CD8-positive, alpha-beta T cell (primary cell): ENCODE measurements at regions of chr12 and their contacts with region 1.

Region 1: GRCh38 chr12:104456417-104456949 is at the start of gene CHST11:
- DNase-seq: peak; percentile 40 to 88 (median 72)
- ATAC-seq: peak; percentile 64
- H3K4me3 ChIP-seq: peak within 1 kb of the TSS; percentile 88 to 97
- H3K4me3 Mint-ChIP-seq: peak within 1 kb of the TSS; percentile 99
- H3K27ac ChIP-seq: peak within 1 kb of the TSS; percentile 70 to 82
- H3K27ac Mint-ChIP-seq: peak within 1 kb of the TSS; percentile 96
- H3K4me1 ChIP-seq: peaks cover 39% of the 10 kb centered on the region
- H3K4me1 Mint-ChIP-seq: peaks cover 42% of the 10 kb centered on the region
- H3K27me3 ChIP-seq: no peaks in the 10 kb centered on the region
- H3K27me3 Mint-ChIP-seq: no peaks in the 10 kb centered on the region
- CTCF ChIP-seq: no peak
- total RNA-seq, gene CHST11: 29.1 to 35.5 TPM

Region 2: DNA sequence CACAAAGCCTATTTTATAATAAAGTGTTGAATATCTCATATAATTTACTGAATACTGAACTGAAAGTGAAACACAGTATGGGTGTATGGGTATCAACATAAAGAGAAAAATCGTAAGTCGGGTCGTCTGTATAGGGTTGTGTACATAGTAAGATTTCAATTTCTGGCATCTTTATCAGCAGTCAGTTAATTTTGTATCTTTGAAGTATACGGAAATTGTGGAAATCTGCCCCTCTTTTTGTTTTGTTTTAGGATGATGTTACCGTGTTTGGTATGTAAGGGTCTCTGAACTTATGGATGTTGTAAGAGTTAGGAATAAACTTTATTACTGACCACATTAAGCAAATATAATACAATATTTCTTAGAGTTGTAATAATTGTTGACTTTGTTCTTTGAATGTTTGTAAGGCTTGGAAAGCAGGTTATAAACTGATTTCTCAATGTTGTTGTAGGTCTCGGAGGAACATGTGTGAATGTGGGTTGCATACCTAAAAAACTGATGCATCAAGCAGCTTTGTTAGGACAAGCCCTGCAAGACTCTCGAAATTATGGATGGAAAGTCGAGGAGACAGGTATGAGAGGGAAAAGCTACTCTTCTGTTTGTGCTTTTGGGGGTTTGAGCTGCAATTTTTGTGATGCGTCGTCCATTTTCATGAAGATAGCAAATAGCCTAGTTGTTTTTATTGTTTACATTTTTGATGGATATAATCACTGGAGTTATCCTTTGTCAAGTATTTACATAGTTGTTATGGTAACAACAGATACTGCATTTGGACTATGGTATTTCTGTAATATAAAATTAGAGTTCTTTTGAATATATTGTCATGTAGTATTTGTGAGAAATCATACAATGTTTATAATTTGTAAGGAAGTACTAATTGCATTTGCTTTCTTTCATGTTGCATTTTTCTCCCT is 140.9 kb before region 1 on chr12:
- CTCF ChIA-PET with region 1: no interaction called
- POLR2A ChIA-PET with region 1: no interaction called
- intact Hi-C with region 1: no loop called
- DNase-seq: no peak
- ATAC-seq: no peak
- H3K4me3 ChIP-seq: no peak overlapping the region
- H3K4me3 Mint-ChIP-seq: no peak overlapping the region
- H3K27ac ChIP-seq: no peak overlapping the region
- H3K27ac Mint-ChIP-seq: no peak overlapping the region
- H3K4me1 ChIP-seq: no peaks in the 10 kb centered on the region
- H3K4me1 Mint-ChIP-seq: no peaks in the 10 kb centered on the region
- H3K27me3 ChIP-seq: no peaks in the 10 kb centered on the region
- H3K27me3 Mint-ChIP-seq: no peaks in the 10 kb centered on the region
- CTCF ChIP-seq: no peak

Region 3: GRCh38 chr12:104358347-104359003 is 98.0 kb before region 1 on chr12:
- CTCF ChIA-PET with region 1: no interaction called
- POLR2A ChIA-PET with region 1: no interaction called
- intact Hi-C with region 1: no loop called
- DNase-seq: peak; percentile 38 to 80 (median 69)
- ATAC-seq: peak; percentile 98
- H3K4me3 ChIP-seq: no peak overlapping the region
- H3K4me3 Mint-ChIP-seq: no peak overlapping the region
- H3K27ac ChIP-seq: no peak overlapping the region
- H3K27ac Mint-ChIP-seq: no peak overlapping the region
- H3K4me1 ChIP-seq: no peaks in the 10 kb centered on the region
- H3K4me1 Mint-ChIP-seq: no peaks in the 10 kb centered on the region
- H3K27me3 ChIP-seq: no peaks in the 10 kb centered on the region
- H3K27me3 Mint-ChIP-seq: no peaks in the 10 kb centered on the region
- CTCF ChIP-seq: peak; percentile 83

Region 4: GRCh38 chr12:104473374-104473983 is 17.0 kb after region 1 on chr12:
- CTCF ChIA-PET with region 1: interaction called, 6 read pairs
- POLR2A ChIA-PET with region 1: interaction called, 25 read pairs
- intact Hi-C with region 1: loop called in 1 of 2 experiments (anchors 2 kb)
- DNase-seq: peak in 2 of 9 experiments; percentile 19 to 50
- ATAC-seq: peak; percentile 39
- H3K4me3 ChIP-seq: no peak overlapping the region
- H3K4me3 Mint-ChIP-seq: peak overlapping the region; percentile 53
- H3K27ac ChIP-seq: peak overlapping the region in 1 of 2 experiments; percentile 63
- H3K27ac Mint-ChIP-seq: peak overlapping the region; percentile 69
- H3K4me1 ChIP-seq: peaks cover 65% of the 10 kb centered on the region
- H3K4me1 Mint-ChIP-seq: peaks cover 87% of the 10 kb centered on the region
- H3K27me3 ChIP-seq: no peaks in the 10 kb centered on the region
- H3K27me3 Mint-ChIP-seq: no peaks in the 10 kb centered on the region
- CTCF ChIP-seq: no peak

Region 5: DNA sequence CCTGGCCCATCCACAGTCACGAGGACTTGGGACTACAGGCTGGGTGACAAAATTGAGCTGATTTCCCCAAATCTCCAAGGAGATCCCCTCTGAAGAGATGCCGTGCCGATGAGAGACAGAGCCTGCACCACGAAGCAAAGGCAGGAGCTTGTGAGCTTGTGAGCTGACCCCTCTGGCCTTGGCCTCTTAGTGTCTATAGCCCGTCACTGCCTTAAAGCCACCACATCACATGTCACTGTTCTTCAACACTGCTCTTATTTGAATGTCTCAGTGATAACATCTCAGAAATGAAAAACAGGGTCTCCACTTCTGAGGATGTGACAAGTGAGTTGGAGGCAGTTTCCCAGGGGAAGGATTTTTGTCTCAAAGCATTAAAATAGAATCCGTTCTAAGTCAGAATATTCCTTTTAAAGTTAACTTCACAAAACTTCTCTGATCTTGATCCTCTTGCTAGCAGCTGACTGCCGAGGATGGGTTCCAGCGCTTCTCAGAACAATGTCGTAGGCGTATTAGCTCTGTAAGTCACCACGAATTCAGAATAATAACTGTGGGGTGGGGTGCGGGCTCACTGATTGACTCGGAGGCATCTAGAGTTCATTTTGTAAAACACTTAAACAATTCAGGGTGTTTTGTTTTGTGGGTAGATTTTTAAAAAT is 37.8 kb after region 1 on chr12:
- CTCF ChIA-PET with region 1: interaction called, 23 read pairs
- POLR2A ChIA-PET with region 1: interaction called, 5 read pairs
- intact Hi-C with region 1: loop called (anchors 2 to 5 kb)
- DNase-seq: peak in 6 of 9 experiments; percentile 29 to 59 (median 46)
- ATAC-seq: peak; percentile 47
- H3K4me3 ChIP-seq: peak overlapping the region in 1 of 2 experiments; percentile 28
- H3K4me3 Mint-ChIP-seq: peak overlapping the region; percentile 78
- H3K27ac ChIP-seq: peak overlapping the region; percentile 5 to 62
- H3K27ac Mint-ChIP-seq: peak overlapping the region; percentile 90
- H3K4me1 ChIP-seq: peaks cover 69% of the 10 kb centered on the region
- H3K4me1 Mint-ChIP-seq: peaks cover 86% of the 10 kb centered on the region
- H3K27me3 ChIP-seq: no peaks in the 10 kb centered on the region
- H3K27me3 Mint-ChIP-seq: no peaks in the 10 kb centered on the region
- CTCF ChIP-seq: no peak

Region 6: DNA sequence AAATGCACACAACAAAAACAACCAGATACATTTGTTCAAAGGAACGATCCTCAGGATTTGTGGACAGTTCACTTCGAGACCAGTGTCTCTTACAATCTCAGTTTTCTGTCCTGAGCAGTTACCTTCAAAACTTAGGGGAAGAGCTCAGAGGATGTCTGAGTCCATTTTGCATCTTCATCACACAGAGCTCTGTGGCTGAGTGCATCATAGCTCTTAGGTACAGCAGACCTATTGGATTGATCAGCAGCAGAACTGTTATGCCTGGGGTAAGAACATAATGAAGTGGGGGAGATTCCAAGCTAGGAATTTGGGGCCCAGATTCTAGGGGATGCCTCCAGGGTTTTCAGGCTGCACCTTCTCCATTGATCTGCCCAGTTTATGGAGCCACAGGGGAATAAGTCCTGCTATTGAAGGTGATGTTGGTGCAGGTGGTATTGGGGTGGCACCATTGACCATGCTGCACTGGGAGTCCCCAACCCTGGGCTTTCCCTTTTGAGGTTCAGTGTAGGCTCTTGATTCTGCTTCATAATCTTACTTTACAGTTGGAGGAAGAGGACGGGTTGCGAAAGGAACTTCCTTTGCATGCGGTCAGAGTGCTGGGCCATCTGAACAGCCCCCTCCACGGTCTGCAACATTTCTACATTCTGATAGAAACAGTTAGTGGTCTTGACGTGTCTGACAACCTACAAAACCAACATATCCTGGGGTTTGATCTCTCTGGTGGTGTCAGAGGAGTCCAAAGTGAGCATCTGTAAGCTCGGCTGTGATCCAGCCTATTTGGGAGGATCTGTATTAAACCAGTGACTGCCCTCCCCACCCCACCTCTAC is 113.1 kb after region 1 on chr12:
- CTCF ChIA-PET with region 1: interaction called, 6 read pairs
- POLR2A ChIA-PET with region 1: interaction called, 3 read pairs
- intact Hi-C with region 1: loop called (anchors 2 to 5 kb)
- DNase-seq: peak; percentile 18 to 91 (median 53)
- ATAC-seq: peak; percentile 87
- H3K4me3 ChIP-seq: peak overlapping the region in 1 of 2 experiments; percentile 14
- H3K4me3 Mint-ChIP-seq: peak overlapping the region; percentile 61
- H3K27ac ChIP-seq: peak overlapping the region in 1 of 2 experiments; percentile 57
- H3K27ac Mint-ChIP-seq: peak overlapping the region; percentile 86
- H3K4me1 ChIP-seq: peaks cover 32% of the 10 kb centered on the region
- H3K4me1 Mint-ChIP-seq: peaks cover 56% of the 10 kb centered on the region
- H3K27me3 ChIP-seq: no peaks in the 10 kb centered on the region
- H3K27me3 Mint-ChIP-seq: no peaks in the 10 kb centered on the region
- CTCF ChIP-seq: no peak

Region 7: GRCh38 chr12:104720339-104721038 is 264.0 kb after region 1 on chr12:
- CTCF ChIA-PET with region 1: interaction called, 4 read pairs
- POLR2A ChIA-PET with region 1: interaction called, 11 read pairs
- intact Hi-C with region 1: loop called (anchors 2 to 5 kb)
- DNase-seq: peak; percentile 43 to 92 (median 73)
- ATAC-seq: peak; percentile 77
- H3K4me3 ChIP-seq: peak overlapping the region; percentile 42 to 53
- H3K4me3 Mint-ChIP-seq: peak overlapping the region; percentile 67
- H3K27ac ChIP-seq: peak overlapping the region; percentile 61 to 71
- H3K27ac Mint-ChIP-seq: peak overlapping the region; percentile 87
- H3K4me1 ChIP-seq: peaks cover 49% of the 10 kb centered on the region
- H3K4me1 Mint-ChIP-seq: peaks cover 71% of the 10 kb centered on the region
- H3K27me3 ChIP-seq: no peaks in the 10 kb centered on the region
- H3K27me3 Mint-ChIP-seq: no peaks in the 10 kb centered on the region
- CTCF ChIP-seq: no peak

Region 8: GRCh38 chr12:104958009-104958945 is 501.8 kb after region 1 on chr12 and contains the start of gene SLC41A2:
- CTCF ChIA-PET with region 1: no interaction called
- POLR2A ChIA-PET with region 1: no interaction called
- intact Hi-C with region 1: loop called (anchors 5 kb)
- DNase-seq: peak; percentile 52 to 90 (median 76)
- ATAC-seq: peak; percentile 90
- H3K4me3 ChIP-seq: peak within 1 kb of the TSS; percentile 61 to 97
- H3K4me3 Mint-ChIP-seq: peak within 1 kb of the TSS; percentile 94
- H3K27ac ChIP-seq: peak within 1 kb of the TSS; percentile 40 to 42
- H3K27ac Mint-ChIP-seq: peak within 1 kb of the TSS; percentile 85
- H3K4me1 ChIP-seq: peaks cover 13% of the 10 kb centered on the region
- H3K4me1 Mint-ChIP-seq: peaks cover 19% of the 10 kb centered on the region
- H3K27me3 ChIP-seq: no peaks in the 10 kb centered on the region
- H3K27me3 Mint-ChIP-seq: peaks cover 17% of the 10 kb centered on the region
- CTCF ChIP-seq: no peak
- total RNA-seq, gene SLC41A2: 3.4 to 4.2 TPM

Region 9: DNA sequence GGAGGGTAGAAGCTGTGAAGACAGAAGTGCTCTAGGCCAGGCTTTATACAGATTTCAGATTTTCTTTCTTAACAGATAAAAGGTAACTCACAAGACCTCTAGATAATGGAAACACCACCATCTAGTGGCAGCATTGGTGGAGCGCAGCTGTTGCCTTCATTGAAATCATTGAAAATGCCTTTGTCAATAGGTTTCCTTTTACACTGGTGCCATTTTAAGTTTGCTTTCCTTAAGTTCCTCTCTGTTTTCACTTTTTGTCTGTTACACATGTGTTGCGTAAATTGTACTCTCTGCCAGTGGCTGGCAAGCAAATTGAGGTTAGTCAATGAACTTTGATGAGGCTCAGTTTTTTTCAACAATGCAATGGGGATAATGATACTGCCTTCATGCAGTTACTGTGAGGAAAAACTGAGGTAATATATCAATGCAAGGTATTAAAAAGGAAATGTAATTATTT is 596.7 kb after region 1 on chr12:
- CTCF ChIA-PET with region 1: interaction called, 3 read pairs
- POLR2A ChIA-PET with region 1: no interaction called
- intact Hi-C with region 1: loop called in 1 of 2 experiments (anchors 5 kb)
- DNase-seq: peak; percentile 54 to 83 (median 72)
- ATAC-seq: peak; percentile 89
- H3K4me3 ChIP-seq: no peak overlapping the region
- H3K4me3 Mint-ChIP-seq: no peak overlapping the region
- H3K27ac ChIP-seq: no peak overlapping the region
- H3K27ac Mint-ChIP-seq: no peak overlapping the region
- H3K4me1 ChIP-seq: no peaks in the 10 kb centered on the region
- H3K4me1 Mint-ChIP-seq: no peaks in the 10 kb centered on the region
- H3K27me3 ChIP-seq: no peaks in the 10 kb centered on the region
- H3K27me3 Mint-ChIP-seq: peaks cover 2% of the 10 kb centered on the region
- CTCF ChIP-seq: peak; percentile 96